Posterior vena cava (tissue), 2 donors: ENCODE measurements at regions of chr7 and their contacts with region 1.

Region 1: GRCh38 chr7:155598810-155599210 is 45.7 kb upstream of the RBM33 start:
- DNase-seq: peak; percentile 93

Region 2: DNA sequence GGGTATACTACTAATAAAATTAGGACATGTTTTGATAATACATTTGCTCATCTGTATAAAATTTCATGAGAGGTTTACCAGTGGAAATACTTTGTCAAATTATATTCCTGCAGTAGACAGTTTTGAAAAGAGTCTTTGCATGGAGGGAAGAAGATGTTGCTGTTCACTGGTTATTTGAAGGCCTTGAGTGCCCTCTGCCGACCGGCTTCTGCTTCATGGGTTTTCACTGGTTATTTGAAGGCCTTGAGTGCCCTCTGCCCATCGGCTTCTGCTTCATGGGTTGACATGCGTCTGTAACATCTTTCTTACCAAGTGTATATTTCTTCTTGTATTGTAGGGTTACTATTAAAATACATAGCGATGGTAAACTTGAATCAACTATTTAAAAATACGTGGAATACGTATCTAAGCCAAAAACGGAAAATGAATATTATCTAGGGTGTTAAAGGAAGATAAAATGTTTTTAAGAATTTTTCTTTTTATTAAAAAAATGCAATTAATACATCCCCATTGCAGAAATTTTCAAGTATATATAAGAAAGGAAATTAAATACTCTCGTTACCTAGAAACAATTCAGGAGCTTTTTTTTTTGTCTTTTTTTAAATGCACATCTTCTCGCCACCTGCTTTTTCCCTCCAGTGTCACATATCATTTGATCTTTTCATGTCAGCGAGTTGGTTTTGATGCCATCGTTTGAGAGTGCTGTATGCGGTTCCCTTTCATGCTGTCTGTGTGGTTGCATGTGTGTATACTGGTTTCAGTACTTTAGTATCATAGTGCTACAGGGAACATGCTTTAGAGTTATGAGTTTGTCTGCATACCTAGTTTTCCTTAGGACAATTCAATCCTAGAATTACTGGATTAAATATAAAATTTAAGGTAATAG is 140.1 kb after region 1 on chr7:
- intact Hi-C with region 1: loop called in 1 of 2 experiments (anchors 10 kb)
- DNase-seq: peak; percentile 92

Region 3: GRCh38 chr7:155763691-155764437 is 165.1 kb after region 1 on chr7:
- intact Hi-C with region 1: loop called in 1 of 2 experiments (anchors 10 kb)
- DNase-seq: no peak